H1 (cell line): ENCODE measurements at regions of chr1 and their contacts with region 1.

Region 1: GRCh38 chr1:75796376-75797272 is at the start of gene MSH4:
- DNase-seq: peak in 1 of 2 experiments; percentile 66
- H3K4me3 ChIP-seq: no peak within 1 kb of the TSS
- H3K27ac ChIP-seq: no peak within 1 kb of the TSS
- H3K4me1 ChIP-seq: no peaks in the 10 kb centered on the region
- H3K27me3 ChIP-seq: no peaks in the 10 kb centered on the region
- CTCF ChIP-seq: no peak
- EP300 ChIP-seq: no peak
- POLR2A ChIP-seq: peak; percentile 70 to 90
- RAD21 ChIP-seq: no peak
- total RNA-seq, gene MSH4: 0.22 and 0.25 TPM in 2 replicates

Region 2: GRCh38 chr1:75811211-75811981 is 14.8 kb after region 1 on chr1:
- CTCF ChIA-PET with region 1: no interaction called
- POLR2A ChIA-PET with region 1: interaction called, 18 read pairs
- DNase-seq: no peak
- H3K4me3 ChIP-seq: no peak overlapping the region
- H3K27ac ChIP-seq: no peak overlapping the region
- H3K4me1 ChIP-seq: no peaks in the 10 kb centered on the region
- H3K27me3 ChIP-seq: no peaks in the 10 kb centered on the region
- CTCF ChIP-seq: no peak
- EP300 ChIP-seq: no peak
- POLR2A ChIP-seq: no peak
- RAD21 ChIP-seq: no peak

Region 3: GRCh38 chr1:75996196-75996595 is 199.6 kb after region 1 on chr1:
- CTCF ChIA-PET with region 1: no interaction called
- POLR2A ChIA-PET with region 1: no interaction called
- DNase-seq: no peak
- H3K4me3 ChIP-seq: no peak overlapping the region
- H3K27ac ChIP-seq: no peak overlapping the region
- H3K4me1 ChIP-seq: no peaks in the 10 kb centered on the region; a peak in 1 of 7 replicates
- H3K27me3 ChIP-seq: no peaks in the 10 kb centered on the region
- CTCF ChIP-seq: no peak
- EP300 ChIP-seq: no peak
- POLR2A ChIP-seq: no peak
- RAD21 ChIP-seq: no peak